Activated T-helper 2 cell treated with anti-CD3 and anti-CD28 coated beads, Interferon-gamma antibody, Interleukin-2, Interleukin-4, amounts not matched to agents 10 μg/mL and 5 μg/mL and 100 μg/mL, durations not matched to agents 14 hours and 24 hours and 36 hours (primary cell): ENCODE measurements at regions of chr15 and their contacts with region 1.

Region 1: DNA sequence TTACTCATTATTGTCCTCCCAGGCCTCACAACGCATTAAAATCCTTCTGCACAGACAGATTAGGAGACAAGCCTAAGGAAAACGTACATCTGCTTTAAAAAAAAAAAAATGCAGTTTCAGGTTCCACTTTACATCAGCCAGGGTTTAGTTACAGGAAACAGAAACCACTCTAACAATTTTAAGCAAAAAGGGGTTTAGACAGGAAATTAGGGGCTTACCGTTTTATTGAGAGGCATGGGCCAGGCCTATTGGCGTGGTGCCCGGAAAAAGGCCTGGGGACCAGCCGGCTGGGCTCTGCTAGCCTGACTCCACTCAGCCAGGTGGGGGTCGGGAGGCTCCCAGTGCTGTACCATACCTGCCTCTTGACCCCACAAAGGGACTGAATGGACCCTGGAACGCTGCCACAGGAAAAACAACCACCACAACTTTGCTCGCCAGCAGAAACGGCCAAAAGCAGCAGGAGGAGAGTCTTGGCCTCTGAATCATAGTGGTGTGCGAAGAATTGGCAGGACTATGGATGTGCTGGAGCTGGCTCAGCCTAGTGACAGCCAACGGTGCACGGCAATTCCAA is 124.3 kb downstream of the CHSY1 start:
- DNase-seq: peak; percentile 33
- H3K4me3 Mint-ChIP-seq: peak overlapping the region; percentile 50
- H3K27ac Mint-ChIP-seq: peak overlapping the region; percentile 89
- H3K4me1 Mint-ChIP-seq: peaks cover 56% of the 10 kb centered on the region
- H3K27me3 Mint-ChIP-seq: peaks cover 4% of the 10 kb centered on the region

Region 2: GRCh38 chr15:101092156-101092866 is 35.3 kb before region 1 on chr15:
- intact Hi-C with region 1: no loop called
- DNase-seq: no peak
- H3K4me3 Mint-ChIP-seq: no peak overlapping the region
- H3K27ac Mint-ChIP-seq: no peak overlapping the region
- H3K4me1 Mint-ChIP-seq: peaks cover 22% of the 10 kb centered on the region
- H3K27me3 Mint-ChIP-seq: peaks cover 18% of the 10 kb centered on the region

Region 3: GRCh38 chr15:101148881-101149664 is 21.5 kb after region 1 on chr15:
- intact Hi-C with region 1: no loop called
- DNase-seq: no peak
- H3K4me3 Mint-ChIP-seq: no peak overlapping the region
- H3K27ac Mint-ChIP-seq: no peak overlapping the region
- H3K4me1 Mint-ChIP-seq: peaks cover 35% of the 10 kb centered on the region
- H3K27me3 Mint-ChIP-seq: no peaks in the 10 kb centered on the region

Region 4: DNA sequence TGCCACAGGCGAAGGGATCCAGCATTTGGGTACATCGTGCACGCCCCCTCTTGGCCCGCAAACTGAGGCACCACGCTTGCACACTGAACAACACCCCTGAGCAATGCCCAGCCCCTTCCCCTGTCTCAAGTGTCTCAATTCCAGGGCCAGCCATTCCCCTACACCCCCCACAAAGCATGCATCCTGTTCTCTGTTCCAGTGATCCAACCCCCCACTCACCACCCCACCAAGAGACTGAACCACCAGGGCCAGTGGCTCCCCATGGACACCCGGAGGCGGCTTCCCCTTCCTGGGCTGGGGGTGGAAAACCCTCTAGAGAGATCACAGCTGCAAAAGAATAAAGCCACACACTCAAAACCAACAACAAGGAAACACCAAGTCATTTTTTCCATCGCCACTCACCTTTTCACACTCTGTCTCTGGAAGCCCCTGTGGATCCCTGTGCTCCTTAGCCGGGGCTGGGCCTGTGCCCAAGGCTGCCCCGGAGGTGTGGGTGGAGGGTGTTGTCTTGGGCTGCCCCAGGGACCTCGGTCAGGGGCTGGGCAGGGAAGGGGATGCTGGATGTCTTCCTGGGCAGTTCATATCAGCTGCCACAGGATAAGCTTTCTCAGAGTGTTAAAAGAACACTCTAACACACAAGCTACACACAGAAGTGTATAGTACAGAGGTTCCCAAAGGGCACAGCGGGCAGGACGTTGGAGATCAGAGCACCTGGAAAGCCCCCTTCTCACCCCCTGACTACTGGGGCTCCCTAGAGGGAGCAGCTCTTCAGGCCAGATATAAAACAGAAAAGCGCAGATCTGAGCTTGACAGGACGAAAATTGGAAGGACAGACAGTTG is 31.7 kb after region 1 on chr15:
- intact Hi-C with region 1: loop called (anchors 1 kb)
- DNase-seq: peak; percentile 18
- H3K4me3 Mint-ChIP-seq: no peak overlapping the region
- H3K27ac Mint-ChIP-seq: peak overlapping the region; percentile 85
- H3K4me1 Mint-ChIP-seq: peaks cover 45% of the 10 kb centered on the region
- H3K27me3 Mint-ChIP-seq: no peaks in the 10 kb centered on the region

Region 5: GRCh38 chr15:101167753-101168463 is 40.3 kb after region 1 on chr15:
- intact Hi-C with region 1: loop called (anchors 1 kb)
- DNase-seq: peak; percentile 80
- H3K4me3 Mint-ChIP-seq: peak overlapping the region; percentile 43
- H3K27ac Mint-ChIP-seq: peak overlapping the region; percentile 92
- H3K4me1 Mint-ChIP-seq: peaks cover 44% of the 10 kb centered on the region
- H3K27me3 Mint-ChIP-seq: no peaks in the 10 kb centered on the region

Region 6: GRCh38 chr15:101242160-101242998 is 114.8 kb after region 1 on chr15:
- intact Hi-C with region 1: loop called (anchors 10 kb)
- DNase-seq: peak; percentile 62
- H3K4me3 Mint-ChIP-seq: peak overlapping the region; percentile 72
- H3K27ac Mint-ChIP-seq: peak overlapping the region; percentile 87
- H3K4me1 Mint-ChIP-seq: peaks cover 90% of the 10 kb centered on the region
- H3K27me3 Mint-ChIP-seq: no peaks in the 10 kb centered on the region